ENCODE measurements at regions of chr1 and their contacts with region 1.

Region 1: DNA sequence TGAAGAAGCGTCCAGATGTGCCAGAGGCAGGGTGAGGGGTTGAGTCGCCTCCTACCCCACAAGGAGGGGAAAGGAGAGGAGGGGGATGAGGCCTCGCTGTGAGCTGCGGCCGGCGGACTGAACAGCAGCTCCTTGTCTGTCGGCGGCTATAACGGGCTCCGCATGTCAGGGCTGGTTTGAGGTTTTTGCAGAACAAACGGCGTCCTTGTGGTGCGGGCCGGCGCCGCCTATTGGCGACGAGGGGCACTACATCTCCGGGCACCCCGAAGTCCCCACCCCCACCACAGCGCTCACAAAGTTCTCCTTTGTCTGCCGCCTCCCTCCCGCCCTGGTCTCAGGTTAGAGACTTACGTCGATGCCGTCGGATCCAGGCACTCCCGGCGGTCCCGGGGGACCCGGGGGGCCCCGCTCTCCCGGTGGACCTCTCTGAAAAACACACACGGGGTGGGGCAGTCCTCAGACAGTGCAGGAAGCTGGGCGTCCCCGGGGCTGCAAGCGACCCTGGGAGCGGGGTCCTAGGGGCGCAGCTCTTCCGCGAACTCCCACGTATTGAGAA is 1.8 kb downstream of the COL9A2 start:
- DNase-seq: peak; percentile 90 to 95
- ATAC-seq: peak; percentile 93
- H3K4me3 ChIP-seq: peak overlapping the region; percentile 28 to 31
- H3K27ac ChIP-seq: peak overlapping the region in 1 of 2 donors; percentile 77
- H3K4me1 ChIP-seq: no peaks in the 10 kb centered on the region
- H3K27me3 ChIP-seq: no peaks in the 10 kb centered on the region

Region 2: DNA sequence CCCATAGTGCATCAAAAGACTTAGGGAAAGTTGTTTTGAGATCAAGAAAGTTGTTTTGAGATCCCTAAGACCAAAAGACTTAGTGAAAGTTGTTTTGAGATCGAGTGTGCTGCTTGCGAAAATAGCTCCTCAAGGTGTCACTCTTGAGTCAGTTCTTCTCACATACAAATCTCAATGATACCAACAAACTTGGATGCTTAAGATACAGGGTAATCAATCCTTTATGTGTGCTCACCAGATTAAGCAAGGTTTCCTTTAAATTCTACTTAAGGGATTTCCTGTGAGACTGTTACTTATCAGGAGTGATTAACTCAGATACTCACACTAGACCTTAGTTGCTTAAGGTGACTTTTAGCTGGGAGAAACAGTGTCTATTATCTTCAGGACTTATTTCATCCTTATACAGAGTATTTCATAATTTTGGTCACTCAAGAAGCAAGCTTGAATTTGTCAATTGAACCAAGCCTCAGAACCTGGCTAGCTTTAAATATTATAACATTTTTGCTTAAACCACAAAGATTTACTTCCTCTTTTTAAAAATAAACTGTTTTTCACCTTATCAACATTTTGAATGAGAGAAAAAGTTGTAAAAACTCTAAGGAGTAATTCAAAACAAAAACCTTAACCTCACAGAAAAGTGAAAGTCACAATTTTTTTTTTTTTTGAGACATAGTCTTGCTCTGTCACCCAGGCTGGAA is 162.1 kb before region 1 on chr1:
- intact Hi-C with region 1: loop called in 1 of 2 experiments (anchors 5 kb)
- DNase-seq: no peak
- ATAC-seq: no peak
- H3K4me3 ChIP-seq: no peak overlapping the region
- H3K27ac ChIP-seq: no peak overlapping the region
- H3K4me1 ChIP-seq: no peaks in the 10 kb centered on the region
- H3K27me3 ChIP-seq: no peaks in the 10 kb centered on the region

Region 3: GRCh38 chr1:40161125-40161887 is 154.0 kb before region 1 on chr1 and contains the start of gene RLF:
- intact Hi-C with region 1: loop called in 1 of 2 experiments (anchors 2 kb)
- DNase-seq: peak; percentile 97 to 99
- ATAC-seq: peak; percentile 100
- H3K4me3 ChIP-seq: peak within 1 kb of the TSS; percentile 48 to 94
- H3K27ac ChIP-seq: peak within 1 kb of the TSS; percentile 78 to 94
- H3K4me1 ChIP-seq: peaks cover 2 to 6% of the 10 kb centered on the region in 2 donors
- H3K27me3 ChIP-seq: no peaks in the 10 kb centered on the region
- total RNA-seq, gene RLF: 20.0 to 25.1 TPM

Region 4: DNA sequence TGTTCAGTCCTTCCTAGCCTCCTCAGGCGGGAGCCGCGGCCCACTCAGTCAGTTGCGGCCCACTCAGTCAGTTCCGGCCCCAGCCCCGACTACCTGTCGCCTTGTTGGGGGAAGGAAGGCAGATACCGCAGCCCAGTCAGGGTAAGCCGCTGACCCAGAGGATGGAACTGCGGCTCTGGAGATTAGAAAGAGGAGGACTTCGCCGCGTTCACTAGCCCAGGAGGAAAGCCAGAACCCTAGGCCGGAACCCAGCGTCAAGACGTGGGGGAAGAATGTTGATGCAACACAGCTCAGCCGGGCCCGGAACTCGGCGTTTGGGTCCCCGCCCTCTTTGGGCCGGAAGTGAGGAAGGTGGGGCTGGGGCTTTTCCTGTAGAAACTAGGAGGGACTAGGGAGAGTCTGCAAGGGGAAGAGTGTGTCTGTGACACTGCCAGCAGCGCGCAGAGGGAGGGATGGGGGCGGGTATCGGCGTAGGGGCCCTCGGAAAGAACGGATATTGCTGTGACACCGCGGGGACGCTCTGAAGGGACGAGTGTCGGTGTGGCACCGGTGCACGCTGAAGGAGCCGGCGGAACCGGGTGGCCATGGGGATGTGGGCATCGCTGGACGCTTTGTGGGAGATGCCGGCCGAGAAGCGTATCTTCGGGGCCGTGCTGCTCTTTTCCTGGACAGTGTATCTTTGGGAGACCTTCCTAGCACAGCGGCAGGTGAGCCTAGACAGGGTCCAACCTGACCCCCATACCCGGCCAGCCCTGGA is 57.5 kb before region 1 on chr1 and contains the start of gene ZMPSTE24:
- intact Hi-C with region 1: loop called in 1 of 2 experiments (anchors 2 kb)
- DNase-seq: peak; percentile 97 to 98
- ATAC-seq: peak; percentile 100
- H3K4me3 ChIP-seq: peak within 1 kb of the TSS; percentile 82 to 88
- H3K27ac ChIP-seq: peak within 1 kb of the TSS; percentile 51 to 98
- H3K4me1 ChIP-seq: peaks cover 0 to 4% of the 10 kb centered on the region in 2 donors
- H3K27me3 ChIP-seq: no peaks in the 10 kb centered on the region
- total RNA-seq, gene ZMPSTE24: 51.1 to 56.5 TPM

Measured in aorta (tissue), 5 donors.